Left ventricle myocardium inferior (tissue), 1 donor: ENCODE measurements at regions of chr19 and their contacts with region 1.

Region 1: DNA sequence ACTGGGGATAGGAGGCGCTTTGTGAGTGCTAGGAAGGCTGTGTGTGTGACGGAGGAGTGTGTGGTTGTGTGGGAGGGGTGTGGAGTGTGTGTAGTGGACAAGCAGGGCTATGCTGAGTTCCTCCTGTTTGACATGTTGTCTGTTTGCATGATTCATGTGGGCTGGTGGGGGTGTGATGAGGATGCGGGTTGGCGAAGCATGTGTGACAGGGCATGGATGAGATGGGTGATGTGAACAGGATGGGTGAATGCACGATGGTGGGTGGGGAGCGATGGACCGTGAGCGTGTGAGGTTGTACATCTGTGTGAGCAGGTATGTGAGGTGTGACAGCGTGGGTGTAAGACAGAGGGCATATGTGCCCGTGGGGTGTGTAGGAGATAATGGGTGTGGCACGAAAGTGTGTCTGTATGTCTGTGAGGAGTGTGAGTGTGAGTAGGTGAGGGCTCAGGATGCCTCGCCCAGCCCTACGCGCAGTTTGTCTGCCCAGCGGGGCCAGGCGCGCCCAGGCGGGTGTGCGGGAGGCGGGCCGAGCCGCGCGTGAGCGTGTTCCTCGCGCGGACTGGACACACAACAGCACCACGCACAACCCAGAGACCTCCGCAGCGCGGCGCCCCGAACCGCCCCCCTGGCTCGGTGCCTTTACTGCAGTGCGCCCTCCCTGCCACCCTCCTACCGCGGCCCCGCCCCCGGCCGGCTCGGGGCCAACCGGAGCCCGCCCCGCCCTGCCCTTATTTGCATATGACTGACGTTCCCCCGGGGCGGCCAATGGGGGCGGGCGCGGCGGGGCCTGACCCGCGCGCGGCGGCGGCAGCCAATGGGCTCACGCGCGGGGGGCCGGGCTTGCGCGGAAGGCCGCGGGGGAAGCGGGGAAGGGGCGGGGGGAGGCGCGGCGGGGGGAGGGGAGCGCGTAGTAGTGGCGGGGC is 14.4 kb downstream of the CIC start:
- DNase-seq: peak; percentile 98
- H3K4me3 ChIP-seq: peak overlapping the region; percentile 74
- H3K27ac ChIP-seq: peak overlapping the region; percentile 98
- H3K4me1 ChIP-seq: peaks cover 78% of the 10 kb centered on the region
- H3K27me3 ChIP-seq: no peaks in the 10 kb centered on the region
- CTCF ChIP-seq: no peak

Region 2: DNA sequence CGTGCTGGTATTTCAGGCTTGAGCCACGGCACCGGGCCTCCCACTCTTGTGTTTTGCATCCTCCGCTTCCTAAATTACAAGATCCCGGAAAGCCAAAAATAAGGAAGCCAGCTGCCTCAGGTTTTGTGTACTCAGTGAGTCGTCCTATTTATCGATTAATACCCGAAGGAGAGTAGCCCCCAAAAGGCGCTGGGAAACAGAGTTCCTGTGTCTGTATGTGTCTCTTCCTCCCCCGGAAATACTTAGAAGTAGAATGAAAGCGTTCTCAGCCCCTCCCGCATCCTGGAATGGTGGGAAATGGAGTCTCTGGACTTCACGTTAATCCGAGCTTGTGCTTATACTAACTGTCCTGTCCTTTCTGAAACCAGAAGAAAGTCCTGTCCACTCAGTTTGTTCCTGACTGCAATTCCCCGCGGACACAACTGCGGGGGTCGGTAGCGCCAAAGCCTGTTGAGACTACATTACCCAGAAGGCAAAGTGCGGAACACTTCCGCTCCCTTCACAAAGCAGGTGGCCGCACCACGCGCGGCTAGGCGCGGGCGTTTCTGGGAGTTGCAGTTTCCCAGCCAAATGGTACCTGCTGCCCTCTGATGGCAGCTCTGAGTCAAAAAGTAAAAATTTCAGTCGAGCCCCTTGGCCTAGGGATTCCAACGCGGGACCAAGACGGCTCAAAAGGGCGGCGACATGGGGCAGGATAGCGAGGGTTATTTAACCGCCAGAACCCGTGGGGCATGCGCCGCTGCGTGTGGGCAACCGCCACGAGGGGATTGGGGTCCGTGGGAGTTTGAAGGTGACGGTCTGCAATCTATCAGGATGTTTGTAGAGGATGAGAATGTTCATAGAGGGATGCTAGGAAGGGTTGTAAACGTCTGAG is 38.8 kb before region 1 on chr19:
- intact Hi-C with region 1: loop called (anchors 5 kb)
- DNase-seq: peak; percentile 93
- H3K4me3 ChIP-seq: peak overlapping the region; percentile 88
- H3K27ac ChIP-seq: peak overlapping the region; percentile 93
- H3K4me1 ChIP-seq: peaks cover 83% of the 10 kb centered on the region
- H3K27me3 ChIP-seq: no peaks in the 10 kb centered on the region
- CTCF ChIP-seq: peak; percentile 76

Region 3: GRCh38 chr19:42254989-42255765 is 28.2 kb before region 1 on chr19 and contains the start of gene ERF:
- intact Hi-C with region 1: loop called (anchors 5 kb)
- DNase-seq: peak; percentile 95
- H3K4me3 ChIP-seq: peak within 1 kb of the TSS; percentile 97
- H3K27ac ChIP-seq: peak within 1 kb of the TSS; percentile 99
- H3K4me1 ChIP-seq: peaks cover 67% of the 10 kb centered on the region
- H3K27me3 ChIP-seq: no peaks in the 10 kb centered on the region
- CTCF ChIP-seq: no peak
- total RNA-seq, gene ERF: 33.5 TPM

Region 4: GRCh38 chr19:42325273-42325895 is 42.0 kb after region 1 on chr19 and contains the start of gene MEGF8:
- intact Hi-C with region 1: no loop called
- DNase-seq: peak; percentile 97
- H3K4me3 ChIP-seq: peak within 1 kb of the TSS; percentile 79
- H3K27ac ChIP-seq: peak within 1 kb of the TSS; percentile 82
- H3K4me1 ChIP-seq: peaks cover 50% of the 10 kb centered on the region
- H3K27me3 ChIP-seq: peaks cover 34% of the 10 kb centered on the region
- CTCF ChIP-seq: peak; percentile 90
- total RNA-seq, gene MEGF8: 34.3 TPM